Panc1 (cell line): ENCODE measurements at regions of chrX and their contacts with region 1.

Region 1: DNA sequence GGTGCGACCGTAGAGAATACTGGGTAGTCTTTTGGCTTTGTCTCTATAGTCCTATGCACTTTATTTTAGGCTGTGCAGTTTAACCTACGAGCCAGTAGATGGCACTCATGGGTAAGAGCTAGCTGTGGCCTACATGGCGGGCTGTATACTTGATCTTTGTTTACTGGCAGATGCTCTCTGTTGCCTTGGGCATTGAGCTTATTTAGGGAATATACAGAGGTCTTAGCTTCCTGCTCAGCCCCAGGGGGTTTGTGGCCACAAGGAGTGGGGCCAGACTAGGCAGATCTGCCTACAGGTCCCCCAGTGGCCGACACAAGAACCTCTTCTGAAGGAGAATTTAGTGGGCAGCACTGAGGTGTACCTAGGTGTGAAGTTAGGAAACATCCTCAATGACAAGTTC is 227.6 kb upstream of the HDX start:
- DNase-seq: peak; percentile 30
- ATAC-seq: peak; percentile 91
- H3K4me3 ChIP-seq: no peak overlapping the region
- H3K27ac ChIP-seq: no peak overlapping the region
- H3K4me1 ChIP-seq: no peaks in the 10 kb centered on the region
- H3K27me3 ChIP-seq: no peaks in the 10 kb centered on the region
- CTCF ChIP-seq: peak; percentile 85

Region 2: GRCh38 chrX:83658731-83659130 is 1071.1 kb before region 1 on chrX:
- CTCF ChIA-PET with region 1: no interaction called
- POLR2A ChIA-PET with region 1: no interaction called
- in situ Hi-C with region 1: no loop called
- intact Hi-C with region 1: no loop called
- DNase-seq: no peak
- ATAC-seq: no peak
- H3K4me3 ChIP-seq: no peak overlapping the region
- H3K27ac ChIP-seq: no peak overlapping the region
- H3K4me1 ChIP-seq: no peaks in the 10 kb centered on the region
- H3K27me3 ChIP-seq: no peaks in the 10 kb centered on the region
- CTCF ChIP-seq: peak; percentile 30

Region 3: GRCh38 chrX:84747516-84747915 is 17.7 kb after region 1 on chrX:
- CTCF ChIA-PET with region 1: no interaction called
- POLR2A ChIA-PET with region 1: no interaction called
- in situ Hi-C with region 1: no loop called
- intact Hi-C with region 1: no loop called
- DNase-seq: no peak
- ATAC-seq: no peak
- H3K4me3 ChIP-seq: no peak overlapping the region
- H3K27ac ChIP-seq: no peak overlapping the region
- H3K4me1 ChIP-seq: no peaks in the 10 kb centered on the region
- H3K27me3 ChIP-seq: no peaks in the 10 kb centered on the region
- CTCF ChIP-seq: no peak

Region 4: GRCh38 chrX:84907324-84907968 is 177.6 kb after region 1 on chrX:
- CTCF ChIA-PET with region 1: no interaction called
- POLR2A ChIA-PET with region 1: no interaction called
- in situ Hi-C with region 1: no loop called
- intact Hi-C with region 1: loop called (anchors 5 kb)
- DNase-seq: no peak
- ATAC-seq: no peak
- H3K4me3 ChIP-seq: no peak overlapping the region
- H3K27ac ChIP-seq: no peak overlapping the region
- H3K4me1 ChIP-seq: no peaks in the 10 kb centered on the region
- H3K27me3 ChIP-seq: no peaks in the 10 kb centered on the region
- CTCF ChIP-seq: peak; percentile 39; the same call in 1 of the 2 replicates

Region 5: DNA sequence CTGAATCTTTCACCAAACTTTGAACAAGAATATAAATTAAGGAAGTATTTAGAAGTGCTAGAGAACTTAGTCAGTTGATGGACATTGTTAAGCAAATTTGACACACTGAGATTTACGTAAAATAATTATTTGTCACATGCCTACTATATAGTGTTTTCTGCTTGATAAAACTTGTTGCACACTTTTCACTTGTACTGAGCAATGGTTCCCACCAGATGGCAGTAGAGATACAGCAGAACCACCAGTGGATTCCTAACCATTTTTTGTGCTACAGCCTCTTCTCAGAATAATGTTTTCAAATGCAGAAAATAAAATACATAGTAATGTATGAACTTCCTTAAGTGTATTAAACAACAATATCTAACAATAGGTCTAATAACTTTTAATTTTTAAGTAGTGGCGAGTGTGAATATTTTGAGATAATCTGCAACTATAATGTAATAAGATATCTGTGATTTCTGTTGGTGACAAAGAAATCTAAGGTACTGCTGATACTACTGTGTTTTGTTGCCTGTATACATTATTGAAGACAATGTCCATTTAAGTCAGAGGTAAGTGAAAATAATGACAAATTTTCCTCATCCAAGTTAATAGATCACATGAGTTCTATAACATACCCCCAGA is 355.1 kb after region 1 on chrX:
- CTCF ChIA-PET with region 1: no interaction called
- POLR2A ChIA-PET with region 1: no interaction called
- in situ Hi-C with region 1: no loop called
- intact Hi-C with region 1: loop called (anchors 2 kb)
- DNase-seq: no peak
- ATAC-seq: no peak
- H3K4me3 ChIP-seq: no peak overlapping the region
- H3K27ac ChIP-seq: no peak overlapping the region
- H3K4me1 ChIP-seq: no peaks in the 10 kb centered on the region
- H3K27me3 ChIP-seq: no peaks in the 10 kb centered on the region
- CTCF ChIP-seq: peak; percentile 74; the same call in 1 of the 2 replicates

Region 6: GRCh38 chrX:85544609-85545008 is 814.8 kb after region 1 on chrX:
- CTCF ChIA-PET with region 1: no interaction called
- POLR2A ChIA-PET with region 1: no interaction called
- in situ Hi-C with region 1: no loop called
- intact Hi-C with region 1: loop called (anchors 10 kb)
- DNase-seq: no peak
- ATAC-seq: no peak
- H3K4me3 ChIP-seq: no peak overlapping the region
- H3K27ac ChIP-seq: no peak overlapping the region
- H3K4me1 ChIP-seq: no peaks in the 10 kb centered on the region
- H3K27me3 ChIP-seq: no peaks in the 10 kb centered on the region
- CTCF ChIP-seq: peak; percentile 40; the same call in 1 of the 2 replicates